ENCODE measurements at regions of chr3 and their contacts with region 1.

Region 1: DNA sequence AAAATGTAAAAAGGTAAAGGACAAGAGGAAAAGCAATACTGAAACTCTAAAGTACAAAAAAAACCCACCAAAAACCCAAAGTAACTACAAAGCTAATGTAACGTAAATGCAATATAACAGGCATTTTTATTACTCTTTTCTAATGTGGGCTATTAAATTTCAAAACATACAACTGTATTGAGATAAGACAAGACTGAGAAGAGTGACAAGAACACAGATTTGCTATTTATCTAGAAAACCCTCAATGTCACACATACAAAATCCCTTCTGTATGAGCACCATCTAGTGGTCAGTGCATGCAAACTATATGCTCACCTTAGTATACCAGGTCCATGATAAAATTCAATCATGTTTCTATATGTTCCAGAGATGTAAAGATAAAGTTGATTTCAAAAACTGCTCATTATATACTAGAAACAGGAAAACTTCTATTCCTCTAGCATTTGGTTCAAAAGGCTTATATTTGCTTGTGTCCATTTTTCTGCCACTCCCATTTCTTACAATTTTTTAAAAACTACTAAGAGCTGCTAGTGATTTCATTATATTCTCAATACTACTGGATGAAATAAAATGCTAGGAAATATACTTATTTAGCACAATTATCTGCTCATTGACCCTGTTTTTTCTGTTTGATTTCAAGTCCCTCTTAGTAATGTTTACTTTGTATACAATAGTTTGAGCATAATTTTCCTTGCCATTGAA is 111.4 kb downstream of the DLG1 start:
- DNase-seq: peak; percentile 16
- H3K4me3 ChIP-seq: no peak overlapping the region
- H3K27ac ChIP-seq: no peak overlapping the region
- H3K27me3 ChIP-seq: no peaks in the 10 kb centered on the region
- CTCF ChIP-seq: peak; percentile 87

Region 2: GRCh38 chr3:196979545-196979944 is 207.5 kb before region 1 on chr3:
- CTCF ChIA-PET with region 1: interaction called, 28 read pairs
- POLR2A ChIA-PET with region 1: no interaction called
- DNase-seq: no peak
- H3K4me3 ChIP-seq: no peak overlapping the region
- H3K27ac ChIP-seq: no peak overlapping the region
- H3K27me3 ChIP-seq: peaks cover 9% of the 10 kb centered on the region
- CTCF ChIP-seq: no peak

Region 3: GRCh38 chr3:197175503-197175902 is 11.5 kb before region 1 on chr3:
- CTCF ChIA-PET with region 1: interaction called, 10 read pairs
- POLR2A ChIA-PET with region 1: no interaction called
- DNase-seq: no peak
- H3K4me3 ChIP-seq: no peak overlapping the region
- H3K27ac ChIP-seq: no peak overlapping the region
- H3K27me3 ChIP-seq: no peaks in the 10 kb centered on the region
- CTCF ChIP-seq: no peak

Region 4: GRCh38 chr3:197197334-197197733 is 10.3 kb after region 1 on chr3:
- CTCF ChIA-PET with region 1: interaction called, 15 read pairs
- POLR2A ChIA-PET with region 1: no interaction called
- DNase-seq: no peak
- H3K4me3 ChIP-seq: no peak overlapping the region
- H3K27ac ChIP-seq: no peak overlapping the region
- H3K27me3 ChIP-seq: no peaks in the 10 kb centered on the region
- CTCF ChIP-seq: no peak

Region 5: GRCh38 chr3:197203714-197204146 is 16.7 kb after region 1 on chr3:
- CTCF ChIA-PET with region 1: interaction called, 16 read pairs
- POLR2A ChIA-PET with region 1: no interaction called
- DNase-seq: no peak
- H3K4me3 ChIP-seq: no peak overlapping the region
- H3K27ac ChIP-seq: no peak overlapping the region
- H3K27me3 ChIP-seq: no peaks in the 10 kb centered on the region
- CTCF ChIP-seq: no peak

Measured in AG04450 (cell line).